Prostate gland (tissue), 2 donors: ENCODE measurements at regions of chr1 and their contacts with region 1.

Region 1: DNA sequence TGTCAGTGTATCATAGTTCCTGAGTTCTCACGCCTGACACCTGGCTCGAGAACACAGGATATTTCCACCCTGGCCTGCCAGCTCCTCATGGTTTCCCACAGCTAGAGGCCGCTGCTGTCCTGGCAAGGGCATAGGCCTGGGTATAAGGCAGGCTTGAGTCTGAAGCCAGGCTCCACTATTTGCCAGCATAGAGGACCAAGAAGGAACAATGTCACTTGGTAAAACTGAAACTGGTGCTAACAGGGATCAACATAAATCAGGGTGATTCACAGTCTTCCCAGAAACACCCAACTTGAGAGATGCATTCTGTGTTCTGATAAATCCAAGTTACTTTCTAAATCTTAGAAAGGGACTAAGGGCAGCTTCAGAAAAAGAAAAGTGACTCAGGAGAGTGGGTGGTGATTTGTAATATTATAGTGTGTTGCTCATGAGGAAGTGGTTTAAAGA is 6.9 kb upstream of the S100A2 start:
- DNase-seq: peak; percentile 89
- H3K4me3 ChIP-seq: no peak overlapping the region
- H3K27ac ChIP-seq: peak overlapping the region in 1 of 2 donors; percentile 24
- H3K4me1 ChIP-seq: no peaks in the 10 kb centered on the region
- H3K27me3 ChIP-seq: no peaks in the 10 kb centered on the region
- CTCF ChIP-seq: peak in 3 of 4 experiments; percentile 90 to 94 (median 91)
- POLR2A ChIP-seq: no peak

Region 2: GRCh38 chr1:153352523-153352922 is 220.1 kb before region 1 on chr1:
- intact Hi-C with region 1: loop called (anchors 5 kb)
- DNase-seq: peak; percentile 57
- H3K4me3 ChIP-seq: no peak overlapping the region
- H3K27ac ChIP-seq: no peak overlapping the region
- H3K4me1 ChIP-seq: no peaks in the 10 kb centered on the region
- H3K27me3 ChIP-seq: no peaks in the 10 kb centered on the region
- CTCF ChIP-seq: peak; percentile 69 to 85 (median 82)
- POLR2A ChIP-seq: no peak

Region 3: GRCh38 chr1:153390938-153391710 is 181.5 kb before region 1 on chr1 and contains the start of gene S100A8:
- intact Hi-C with region 1: no loop called
- DNase-seq: peak; percentile 19
- H3K4me3 ChIP-seq: no peak within 1 kb of the TSS
- H3K27ac ChIP-seq: no peak within 1 kb of the TSS
- H3K4me1 ChIP-seq: no peaks in the 10 kb centered on the region
- H3K27me3 ChIP-seq: no peaks in the 10 kb centered on the region
- CTCF ChIP-seq: no peak
- POLR2A ChIP-seq: no peak
- total RNA-seq, gene S100A8: 1.5 to 5.6 TPM

Region 4: DNA sequence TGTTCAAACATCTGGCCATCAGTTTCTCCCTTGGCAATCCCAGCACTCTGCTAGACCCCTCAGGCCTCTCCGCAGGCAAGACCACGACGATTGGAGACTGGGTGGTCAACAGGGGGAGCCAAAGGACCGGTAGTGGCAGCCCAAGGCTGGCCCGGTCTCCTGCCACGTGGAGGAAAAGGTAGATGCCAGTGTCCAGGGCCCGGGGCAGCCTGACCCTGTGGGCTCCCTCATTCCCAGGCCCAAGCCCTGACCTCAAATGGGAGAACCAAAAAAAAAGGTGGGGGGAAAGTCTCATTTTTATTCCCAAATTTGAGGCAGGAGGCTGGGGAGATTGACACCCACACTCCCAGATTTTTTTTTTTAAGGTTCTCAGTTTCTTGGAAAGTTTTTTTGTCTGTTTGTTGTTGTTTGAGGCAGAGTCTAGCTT is 61.6 kb before region 1 on chr1:
- intact Hi-C with region 1: loop called (anchors 1 kb)
- DNase-seq: peak; percentile 72
- H3K4me3 ChIP-seq: no peak overlapping the region
- H3K27ac ChIP-seq: no peak overlapping the region
- H3K4me1 ChIP-seq: no peaks in the 10 kb centered on the region
- H3K27me3 ChIP-seq: no peaks in the 10 kb centered on the region
- CTCF ChIP-seq: peak; percentile 62 to 94 (median 80)
- POLR2A ChIP-seq: no peak

Region 5: DNA sequence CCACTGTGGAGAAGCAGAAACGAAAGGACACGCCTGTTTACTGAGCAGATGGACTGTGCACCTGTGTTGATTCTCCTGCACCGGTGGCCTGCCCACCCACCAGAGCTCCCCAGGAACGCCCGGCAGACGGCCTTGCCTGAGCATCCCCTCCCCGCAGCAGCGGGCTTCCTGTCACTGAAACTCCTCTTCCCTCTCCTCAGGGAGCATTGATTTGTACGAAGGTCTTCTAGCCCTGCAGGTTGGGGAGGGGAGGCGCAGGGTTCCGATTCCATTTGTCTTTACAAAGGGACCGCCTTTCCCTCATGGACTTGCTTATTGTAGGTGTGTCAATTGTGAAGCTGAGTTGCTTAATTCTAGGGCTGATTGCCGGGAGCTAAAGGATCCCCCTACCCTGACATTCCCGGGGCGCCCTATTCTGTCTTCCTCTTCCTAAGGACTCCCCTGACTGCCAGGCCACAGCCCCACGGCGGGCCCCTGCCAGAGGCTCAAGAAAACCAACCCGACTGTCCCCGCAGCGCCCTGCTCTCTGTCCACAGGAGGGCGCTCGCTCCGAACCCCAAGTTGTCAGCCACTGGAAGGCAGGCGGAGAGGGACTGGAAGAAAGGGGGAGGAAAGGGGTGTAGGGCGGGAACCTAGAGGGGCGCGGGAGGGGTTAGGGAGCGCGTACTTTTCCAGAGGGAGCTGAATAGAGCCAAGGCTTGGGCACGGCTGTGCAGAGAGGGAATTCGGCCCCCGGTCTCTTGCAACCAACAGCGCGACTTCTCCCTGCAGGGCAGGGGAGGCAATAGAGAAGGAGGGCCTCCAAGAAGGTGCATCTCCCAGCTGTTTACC is 39.6 kb before region 1 on chr1:
- intact Hi-C with region 1: loop called (anchors 1 kb)
- DNase-seq: peak; percentile 84
- H3K4me3 ChIP-seq: peak overlapping the region; percentile 21 to 74
- H3K27ac ChIP-seq: peak overlapping the region; percentile 92 to 96
- H3K4me1 ChIP-seq: peaks cover 3% of the 10 kb centered on the region
- H3K27me3 ChIP-seq: no peaks in the 10 kb centered on the region
- CTCF ChIP-seq: peak; percentile 59 to 93 (median 88)
- POLR2A ChIP-seq: peak; percentile 13

Region 6: DNA sequence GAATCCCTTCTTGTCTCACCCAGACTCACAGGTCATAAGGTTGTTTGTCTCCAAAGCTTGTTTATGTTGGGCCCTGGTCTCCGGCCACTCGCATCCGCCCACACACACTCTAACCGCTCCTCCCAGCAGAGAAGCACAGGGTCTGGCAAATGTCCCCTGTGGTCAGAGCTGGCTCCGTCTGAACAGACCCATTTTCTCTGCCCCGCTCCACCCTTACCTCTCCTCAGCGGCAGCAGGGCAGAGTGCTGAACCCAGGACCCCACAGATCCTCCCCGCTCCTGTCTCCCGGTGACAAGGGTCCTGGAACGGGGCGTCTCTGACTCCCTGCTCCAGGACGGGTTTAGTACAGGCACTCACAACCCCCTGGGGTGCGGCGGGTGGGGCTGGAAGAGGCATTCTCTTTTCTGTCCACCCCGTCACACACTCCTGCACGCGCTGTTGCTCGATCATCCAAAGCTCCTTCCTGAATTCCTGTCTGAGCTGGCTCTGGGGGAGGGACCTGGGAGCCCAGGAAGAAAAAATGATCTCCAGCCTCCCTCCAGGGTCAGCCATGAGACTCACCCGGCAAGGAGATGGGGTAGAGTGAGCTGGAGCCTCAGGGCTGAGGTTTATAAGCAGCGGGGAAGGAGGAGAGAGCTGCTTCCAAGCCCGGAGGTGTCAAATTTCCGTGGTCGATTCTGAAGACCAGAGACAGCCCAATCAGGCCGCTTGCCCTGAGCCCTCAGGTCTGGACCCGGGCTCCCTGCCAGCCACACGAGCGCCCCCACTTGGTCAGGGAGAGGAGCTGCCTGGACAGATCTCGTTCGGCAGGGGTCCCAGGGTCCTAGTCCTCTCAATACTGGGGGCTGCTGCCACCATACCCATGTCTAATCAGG is 54.6 kb after region 1 on chr1 and contains the start of gene S100A13:
- intact Hi-C with region 1: loop called (anchors 5 kb)
- DNase-seq: peak; percentile 43
- H3K4me3 ChIP-seq: peak within 1 kb of the TSS; percentile 37 to 45
- H3K27ac ChIP-seq: peak within 1 kb of the TSS; percentile 84
- H3K4me1 ChIP-seq: peaks cover 5% of the 10 kb centered on the region
- H3K27me3 ChIP-seq: no peaks in the 10 kb centered on the region
- CTCF ChIP-seq: peak in 3 of 4 experiments; percentile 11 to 67 (median 18)
- POLR2A ChIP-seq: peak; percentile 41
- total RNA-seq, gene S100A13: 53.3 to 96.5 TPM

Region 7: GRCh38 chr1:153670859-153671627 is 98.5 kb after region 1 on chr1 and contains the start of gene ILF2:
- intact Hi-C with region 1: loop called (anchors 5 kb)
- DNase-seq: peak; percentile 98
- H3K4me3 ChIP-seq: peak within 1 kb of the TSS; percentile 62 to 77
- H3K27ac ChIP-seq: peak within 1 kb of the TSS; percentile 79 to 83
- H3K4me1 ChIP-seq: peaks cover 8% of the 10 kb centered on the region
- H3K27me3 ChIP-seq: no peaks in the 10 kb centered on the region
- CTCF ChIP-seq: peak in 1 of 4 experiments; percentile 34
- POLR2A ChIP-seq: peak; percentile 87
- total RNA-seq, gene ILF2: 116 to 122 TPM

Region 8: DNA sequence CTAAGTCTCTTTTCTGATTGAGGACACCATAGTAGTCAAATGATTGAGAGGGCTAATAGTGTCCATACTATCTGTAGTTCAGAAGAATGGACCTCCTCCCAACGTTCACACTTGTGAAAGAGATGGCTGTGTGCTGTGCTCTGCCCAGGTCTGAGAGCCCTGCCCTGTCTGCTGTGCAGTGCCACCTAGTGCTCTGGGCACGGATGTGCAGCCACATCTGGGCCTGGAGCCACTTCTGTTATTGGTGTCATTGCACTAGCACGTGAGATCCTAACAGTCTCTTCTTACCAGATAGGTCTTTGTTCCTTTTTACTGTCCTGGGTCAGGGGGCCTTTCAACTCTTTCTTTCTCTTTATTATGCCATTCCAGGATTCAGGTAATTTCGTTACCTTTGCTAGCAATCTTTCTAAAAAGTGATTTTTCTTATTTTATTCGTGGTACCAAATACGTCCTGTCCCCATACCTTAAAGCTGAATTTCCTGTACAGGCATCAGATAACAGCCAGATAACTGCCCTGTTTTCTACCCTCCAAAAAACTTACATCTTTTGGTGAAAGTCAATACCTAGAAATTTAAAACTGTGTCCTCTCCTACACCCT is 176.9 kb after region 1 on chr1:
- intact Hi-C with region 1: loop called (anchors 5 kb)
- DNase-seq: peak; percentile 83
- H3K4me3 ChIP-seq: no peak overlapping the region
- H3K27ac ChIP-seq: peak overlapping the region; percentile 5 to 36
- H3K4me1 ChIP-seq: peaks cover 13% of the 10 kb centered on the region
- H3K27me3 ChIP-seq: no peaks in the 10 kb centered on the region
- CTCF ChIP-seq: peak; percentile 50 to 93 (median 84)
- POLR2A ChIP-seq: no peak